Head of caudate nucleus (tissue), 42 donors: ENCODE measurements at regions of chr6 and their contacts with region 1.

Region 1: GRCh38 chr6:159042003-159042825 is 2.6 kb downstream of the TAGAP start:
- DNase-seq: peak; percentile 18 to 86 (median 66)

Region 2: DNA sequence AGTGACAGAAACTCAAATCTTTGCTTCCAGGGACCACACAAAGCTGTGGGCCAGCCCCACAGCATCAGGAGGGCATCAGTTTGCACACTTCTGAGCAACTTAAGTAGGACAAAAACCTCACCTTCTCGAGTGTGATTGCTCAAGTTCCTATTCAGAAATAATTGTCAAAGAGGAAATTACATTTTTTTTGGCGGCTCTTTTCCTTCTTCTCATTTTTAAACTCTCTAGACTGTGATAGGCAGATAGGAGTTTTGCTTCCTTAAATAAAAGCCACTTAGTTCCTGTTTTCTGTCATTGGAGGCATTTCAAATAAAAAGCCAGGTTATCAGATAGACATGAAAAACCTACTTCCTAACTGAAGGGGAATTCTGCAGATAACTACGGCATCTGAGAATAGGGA is 13.8 kb after region 1 on chr6:
- intact Hi-C with region 1: loop called (anchors 1 kb)
- DNase-seq: no peak

Region 3: DNA sequence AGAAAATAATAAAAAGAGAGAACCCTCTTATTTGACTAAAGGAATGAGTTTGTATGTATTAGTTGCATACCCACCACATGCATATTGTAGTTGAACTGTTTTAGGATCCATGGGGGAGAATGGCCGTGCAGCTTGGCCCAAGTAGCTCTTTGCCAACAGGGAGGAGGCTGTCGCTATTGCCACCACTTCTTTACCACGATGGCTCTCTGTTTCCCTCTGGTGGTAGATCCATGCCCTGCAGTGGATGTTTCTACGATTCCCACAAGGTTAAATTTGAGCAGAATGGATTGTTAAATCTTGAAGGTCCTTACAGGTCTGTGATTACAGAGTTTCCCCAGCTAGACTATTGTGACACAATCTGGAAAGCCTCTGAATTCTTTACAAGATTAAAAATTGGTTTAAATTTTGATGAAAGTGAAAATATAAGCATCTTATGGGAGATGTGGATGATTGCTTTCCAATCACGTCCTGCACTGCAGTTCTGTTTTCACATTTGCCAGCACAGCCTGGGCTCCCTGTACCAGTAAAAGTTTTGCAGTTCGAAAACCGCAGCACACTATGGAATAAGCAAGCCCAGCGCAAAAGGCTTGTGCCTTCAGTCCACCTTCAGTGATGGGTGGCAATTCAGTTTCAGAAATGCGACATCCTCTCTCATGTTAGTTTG is 92.6 kb after region 1 on chr6:
- intact Hi-C with region 1: loop called (anchors 5 kb)
- DNase-seq: peak in 41 of 42 donors; percentile 31 to 95 (median 81)